ENCODE measurements at regions of chr6 and their contacts with region 1.

Region 1: DNA sequence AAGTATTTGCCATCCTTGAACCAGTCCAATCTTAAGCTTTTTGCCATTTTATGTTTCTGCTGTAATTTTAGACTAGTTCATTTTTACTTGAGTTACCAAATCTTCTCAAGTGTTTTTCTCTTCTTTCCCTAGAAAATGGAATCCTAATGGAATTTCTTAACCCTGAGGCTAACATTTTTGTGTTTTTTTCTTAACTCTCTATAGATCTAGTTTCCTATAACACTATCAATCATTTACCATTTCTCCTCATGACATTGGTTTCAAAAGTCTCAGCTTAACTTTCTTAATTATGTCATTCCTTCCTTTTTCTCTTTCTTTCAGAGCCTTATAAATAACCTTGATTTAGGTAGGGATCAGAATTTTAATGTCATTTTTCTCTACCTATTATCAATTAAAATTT is 54.8 kb downstream of the SENP6 start:
- DNase-seq: no peak
- H3K4me3 Mint-ChIP-seq: no peak overlapping the region
- H3K27ac Mint-ChIP-seq: peak overlapping the region; percentile 11
- H3K4me1 Mint-ChIP-seq: peaks cover 23% of the 10 kb centered on the region
- H3K27me3 Mint-ChIP-seq: no peaks in the 10 kb centered on the region
- CTCF ChIP-seq: no peak

Region 2: GRCh38 chr6:75402296-75402695 is 254.2 kb before region 1 on chr6:
- CTCF ChIA-PET with region 1: no interaction called
- intact Hi-C with region 1: no loop called
- DNase-seq: no peak
- H3K4me3 Mint-ChIP-seq: no peak overlapping the region
- H3K27ac Mint-ChIP-seq: no peak overlapping the region
- H3K4me1 Mint-ChIP-seq: no peaks in the 10 kb centered on the region
- H3K27me3 Mint-ChIP-seq: peaks cover 15% of the 10 kb centered on the region
- CTCF ChIP-seq: no peak

Region 3: DNA sequence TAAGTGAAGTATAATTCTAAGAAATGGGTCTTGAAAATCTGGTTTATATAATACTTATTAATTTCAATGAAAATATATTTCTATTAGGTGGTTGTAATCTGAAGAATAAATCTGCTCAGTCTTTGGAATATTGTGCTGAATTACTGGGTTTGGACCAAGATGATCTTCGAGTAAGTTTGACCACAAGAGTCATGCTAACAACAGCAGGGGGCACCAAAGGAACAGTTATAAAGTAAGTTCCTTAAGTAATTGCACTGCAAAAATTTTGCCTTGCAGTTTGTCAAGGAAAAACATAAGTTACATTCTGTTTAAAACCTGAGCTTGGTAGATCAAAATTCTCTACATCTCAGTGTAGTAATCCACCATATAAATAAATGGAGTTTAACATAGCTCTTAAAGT is 198.6 kb after region 1 on chr6:
- CTCF ChIA-PET with region 1: no interaction called
- intact Hi-C with region 1: loop called (anchors 10 kb)
- DNase-seq: peak; percentile 42
- H3K4me3 Mint-ChIP-seq: no peak overlapping the region
- H3K27ac Mint-ChIP-seq: no peak overlapping the region
- H3K4me1 Mint-ChIP-seq: peaks cover 21% of the 10 kb centered on the region
- H3K27me3 Mint-ChIP-seq: no peaks in the 10 kb centered on the region
- CTCF ChIP-seq: peak; percentile 39

Measured in Calu3 (cell line).